GM12878 (cell line): ENCODE measurements at regions of chr2 and their contacts with region 1.

Region 1: DNA sequence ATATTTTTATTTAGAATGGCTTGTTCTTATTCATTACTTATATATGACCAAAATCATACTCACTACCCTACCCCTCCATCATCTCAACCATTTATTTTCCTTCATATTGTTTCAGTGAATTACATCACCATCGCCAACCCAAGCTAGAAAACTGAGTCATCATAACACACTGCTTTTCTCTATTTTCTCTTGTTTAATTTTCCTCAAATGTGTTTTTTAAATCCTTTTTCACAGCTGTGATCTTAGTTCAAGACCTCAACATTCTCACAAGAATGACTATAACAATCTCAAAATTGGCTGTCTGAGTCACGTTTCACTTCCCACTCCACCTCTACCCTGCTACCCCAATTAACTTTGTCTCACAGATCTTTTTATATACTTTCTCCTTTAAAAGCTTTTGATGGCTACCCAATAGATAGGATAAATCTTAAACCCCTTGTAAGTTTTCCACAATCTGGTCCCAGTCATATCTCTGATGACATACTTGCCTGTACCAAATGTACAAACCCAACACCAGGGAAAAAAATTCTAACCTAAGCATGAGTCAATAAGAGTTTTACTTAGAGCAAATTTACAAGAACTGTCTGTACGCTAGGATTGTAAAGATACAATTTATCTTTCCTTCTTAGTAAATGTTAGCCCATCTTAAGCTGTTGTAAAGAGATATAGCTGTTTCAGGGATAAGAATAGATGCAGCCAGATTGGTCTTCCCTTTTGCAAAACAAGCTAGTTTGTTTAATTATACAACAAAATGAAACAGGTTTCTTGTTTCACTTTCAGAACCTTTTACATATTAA is 635.1 kb upstream of the SLC39A10 start:
- DNase-seq: peak; percentile 52
- ATAC-seq: peak; percentile 93
- H3K4me3 ChIP-seq: no peak overlapping the region
- H3K27ac ChIP-seq: no peak overlapping the region
- H3K4me1 ChIP-seq: peaks cover 3% of the 10 kb centered on the region; the same call in 1 of the 2 replicates
- H3K27me3 ChIP-seq: no peaks in the 10 kb centered on the region
- CTCF ChIP-seq: no peak
- EP300 ChIP-seq: peak in 1 of 2 experiments; percentile 59; a peak in 1 of 4 replicates
- POLR2A ChIP-seq: no peak
- RAD21 ChIP-seq: no peak

Region 2: GRCh38 chr2:195009202-195009601 is 12.7 kb before region 1 on chr2:
- CTCF ChIA-PET with region 1: interaction called, 4 read pairs
- POLR2A ChIA-PET with region 1: interaction called, 3 read pairs
- RAD21 ChIA-PET with region 1: no interaction called
- SMC1A ChIA-PET with region 1: interaction called, 12 read pairs
- in situ Hi-C with region 1: no loop called
- intact Hi-C with region 1: no loop called
- DNase-seq: no peak
- ATAC-seq: no peak
- H3K4me3 ChIP-seq: no peak overlapping the region
- H3K27ac ChIP-seq: no peak overlapping the region
- H3K4me1 ChIP-seq: no peaks in the 10 kb centered on the region
- H3K27me3 ChIP-seq: no peaks in the 10 kb centered on the region
- CTCF ChIP-seq: no peak
- EP300 ChIP-seq: no peak
- POLR2A ChIP-seq: no peak
- RAD21 ChIP-seq: no peak

Region 3: GRCh38 chr2:195049372-195050031 is 27.6 kb after region 1 on chr2:
- CTCF ChIA-PET with region 1: no interaction called
- POLR2A ChIA-PET with region 1: no interaction called
- RAD21 ChIA-PET with region 1: interaction called, 3 read pairs
- SMC1A ChIA-PET with region 1: interaction called, 11 read pairs
- in situ Hi-C with region 1: no loop called
- intact Hi-C with region 1: no loop called
- DNase-seq: no peak
- ATAC-seq: peak; percentile 81
- H3K4me3 ChIP-seq: no peak overlapping the region
- H3K27ac ChIP-seq: no peak overlapping the region
- H3K4me1 ChIP-seq: no peaks in the 10 kb centered on the region
- H3K27me3 ChIP-seq: no peaks in the 10 kb centered on the region
- CTCF ChIP-seq: no peak
- EP300 ChIP-seq: peak; percentile 11 to 54; a peak in 1 of 4 replicates
- POLR2A ChIP-seq: no peak
- RAD21 ChIP-seq: no peak